HepG2 (cell line): ENCODE measurements at regions of chr1 and their contacts with region 1.

Region 1: GRCh38 chr1:47313915-47314664 is at the start of gene STIL:
- DNase-seq: peak; percentile 99
- ATAC-seq: peak; percentile 97
- H3K4me3 ChIP-seq: peak within 1 kb of the TSS; percentile 79 to 86 (median 81)
- H3K27ac ChIP-seq: peak within 1 kb of the TSS; percentile 89
- H3K4me1 ChIP-seq: peaks cover 33% of the 10 kb centered on the region
- H3K27me3 ChIP-seq: no peaks in the 10 kb centered on the region; a peak in 1 of 5 replicates
- CTCF ChIP-seq: peak; percentile 7; the same call in 1 of the 2 replicates
- EP300 ChIP-seq: no peak
- POLR2A ChIP-seq: peak; percentile 65 to 79
- RAD21 ChIP-seq: 0 out of 2 replicates have a peak, but pooled peaks have one; percentile 19
- total RNA-seq, gene STIL: 18.6 and 22.8 TPM in 2 replicates

Region 2: DNA sequence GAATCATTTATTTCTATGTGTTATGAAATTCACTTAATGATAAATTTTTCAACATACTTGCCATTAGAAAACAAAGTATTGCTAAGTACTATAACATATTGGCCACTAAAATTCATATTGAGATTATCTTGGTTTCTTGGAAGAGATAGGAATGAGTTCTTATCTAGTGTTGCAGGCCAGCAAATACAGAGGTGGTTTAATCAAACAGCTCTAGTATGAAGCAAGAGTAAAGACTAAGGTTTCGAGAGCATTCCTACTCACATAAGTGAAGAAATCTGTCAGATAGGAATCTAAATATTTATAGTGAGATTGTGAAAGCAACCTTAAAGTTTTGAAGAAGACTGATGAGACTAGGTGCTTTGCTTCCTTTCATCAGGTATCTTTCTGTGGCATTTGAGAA is 64.1 kb after region 1 on chr1:
- CTCF ChIA-PET with region 1: no interaction called
- POLR2A ChIA-PET with region 1: no interaction called
- in situ Hi-C with region 1: no loop called
- intact Hi-C with region 1: loop called (anchors 5 kb)
- DNase-seq: peak; percentile 73
- ATAC-seq: peak; percentile 35; the same call in 2 of the 3 replicates
- H3K4me3 ChIP-seq: no peak overlapping the region
- H3K27ac ChIP-seq: peak overlapping the region; percentile 75
- H3K4me1 ChIP-seq: peaks cover 65% of the 10 kb centered on the region
- H3K27me3 ChIP-seq: no peaks in the 10 kb centered on the region
- CTCF ChIP-seq: no peak
- EP300 ChIP-seq: peak in 1 of 2 experiments; percentile 90; a peak in 1 of 4 replicates
- POLR2A ChIP-seq: no peak
- RAD21 ChIP-seq: no peak

Region 3: GRCh38 chr1:47487850-47488450 is 173.9 kb after region 1 on chr1:
- CTCF ChIA-PET with region 1: no interaction called
- POLR2A ChIA-PET with region 1: no interaction called
- in situ Hi-C with region 1: no loop called
- intact Hi-C with region 1: no loop called
- DNase-seq: no peak
- ATAC-seq: no peak
- H3K4me3 ChIP-seq: no peak overlapping the region
- H3K27ac ChIP-seq: no peak overlapping the region
- H3K4me1 ChIP-seq: no peaks in the 10 kb centered on the region
- H3K27me3 ChIP-seq: peaks cover 8 to 97% of the 10 kb centered on the region in 2 experiments; a peak in 4 of 5 replicates
- CTCF ChIP-seq: no peak
- EP300 ChIP-seq: no peak
- POLR2A ChIP-seq: no peak
- RAD21 ChIP-seq: no peak